Gastrocnemius medialis (tissue), 4 donors: ENCODE measurements at regions of chr18 and their contacts with region 1.

Region 1: DNA sequence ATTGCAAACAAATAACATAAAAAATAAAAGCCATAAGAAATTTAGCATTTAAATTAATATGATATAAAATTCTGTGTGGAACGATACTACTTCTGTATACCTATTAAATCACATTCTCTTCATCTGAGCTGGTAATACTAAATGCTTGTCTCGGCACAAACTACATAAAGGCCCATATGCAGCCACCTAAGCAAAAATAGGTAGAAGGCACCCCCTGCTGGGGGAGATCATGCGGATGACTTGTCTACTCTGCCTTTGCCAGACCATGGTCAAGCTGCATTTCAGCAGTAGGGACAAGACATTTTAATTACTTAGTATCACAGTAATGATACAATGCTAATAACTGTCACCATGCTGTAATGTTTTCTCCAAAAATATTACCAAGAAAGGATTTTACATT is 108.0 kb downstream of the CDH19 start:
- DNase-seq: peak in 1 of 2 donors; percentile 13
- ATAC-seq: peak in 1 of 2 donors; percentile 62
- H3K4me3 ChIP-seq: no peak overlapping the region
- H3K27ac ChIP-seq: no peak overlapping the region
- H3K4me1 ChIP-seq: no peaks in the 10 kb centered on the region
- H3K27me3 ChIP-seq: no peaks in the 10 kb centered on the region
- CTCF ChIP-seq: peak in 2 of 5 experiments; percentile 13 to 25
- POLR2A ChIP-seq: no peak

Region 2: GRCh38 chr18:65725251-65726050 is 770.4 kb before region 1 on chr18:
- in situ Hi-C with region 1: no loop called
- intact Hi-C with region 1: loop called (anchors 5 kb)
- DNase-seq: no peak
- ATAC-seq: no peak
- H3K4me3 ChIP-seq: no peak overlapping the region
- H3K27ac ChIP-seq: no peak overlapping the region
- H3K4me1 ChIP-seq: peaks cover 0 to 6% of the 10 kb centered on the region in 2 donors
- H3K27me3 ChIP-seq: no peaks in the 10 kb centered on the region
- CTCF ChIP-seq: peak in 1 of 5 experiments; percentile 13
- POLR2A ChIP-seq: no peak

Region 3: DNA sequence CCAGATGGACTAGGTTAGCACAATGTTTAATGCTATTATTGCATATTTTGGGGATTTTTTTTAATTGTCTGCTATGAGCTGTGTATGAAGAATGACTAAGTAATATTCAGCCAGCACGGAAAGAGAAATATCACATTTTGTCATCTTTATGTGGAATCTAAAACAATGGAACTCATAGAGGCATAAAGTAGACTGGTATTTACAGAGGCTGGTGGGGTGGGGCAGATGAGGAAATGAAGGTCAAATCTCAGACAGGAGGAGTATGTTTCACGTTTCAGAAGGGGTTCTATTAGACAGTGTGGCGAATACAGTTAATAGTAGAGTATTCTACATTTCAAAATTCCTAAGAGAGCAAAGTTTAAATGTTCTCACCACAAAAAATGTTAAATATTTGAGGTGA is 103.3 kb after region 1 on chr18:
- in situ Hi-C with region 1: loop called in 1 of 4 experiments (anchors 25 kb)
- intact Hi-C with region 1: no loop called
- DNase-seq: no peak
- ATAC-seq: no peak
- H3K4me3 ChIP-seq: no peak overlapping the region
- H3K27ac ChIP-seq: no peak overlapping the region
- H3K4me1 ChIP-seq: no peaks in the 10 kb centered on the region
- H3K27me3 ChIP-seq: no peaks in the 10 kb centered on the region
- CTCF ChIP-seq: no peak
- POLR2A ChIP-seq: no peak